ENCODE measurements at regions of chr10 and their contacts with region 1.

Region 1: GRCh38 chr10:52308251-52309031 is 5.6 kb upstream of the DKK1 start:
- DNase-seq: peak; percentile 54
- ATAC-seq: no peak
- H3K4me3 Mint-ChIP-seq: peak overlapping the region; percentile 5
- H3K27ac Mint-ChIP-seq: no peak overlapping the region
- H3K4me1 Mint-ChIP-seq: peaks cover 11% of the 10 kb centered on the region
- H3K27me3 Mint-ChIP-seq: peaks cover 39% of the 10 kb centered on the region

Region 2: DNA sequence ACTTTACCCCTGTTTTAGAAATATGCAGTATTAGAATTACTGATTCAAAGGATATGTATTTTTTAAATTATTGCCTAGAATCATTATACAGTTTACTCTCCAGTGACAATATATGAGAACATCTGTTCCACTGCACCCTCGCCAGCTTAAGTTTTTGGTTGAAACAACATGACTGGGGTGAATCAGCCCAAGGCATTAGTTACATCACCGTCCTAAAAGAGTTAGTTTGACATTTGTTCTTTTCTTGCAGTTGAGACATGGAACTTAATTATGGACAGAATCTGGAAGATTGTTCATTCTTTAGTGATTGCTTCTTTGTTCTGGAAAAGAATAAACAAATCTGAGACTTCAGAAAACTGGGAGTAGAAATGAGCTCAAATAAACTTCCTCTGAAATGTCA is 161.7 kb before region 1 on chr10:
- CTCF ChIA-PET with region 1: no interaction called
- POLR2A ChIA-PET with region 1: no interaction called
- intact Hi-C with region 1: no loop called
- DNase-seq: no peak
- ATAC-seq: no peak
- H3K4me3 Mint-ChIP-seq: no peak overlapping the region
- H3K27ac Mint-ChIP-seq: no peak overlapping the region
- H3K4me1 Mint-ChIP-seq: no peaks in the 10 kb centered on the region
- H3K27me3 Mint-ChIP-seq: no peaks in the 10 kb centered on the region

Region 3: GRCh38 chr10:52332815-52333214 is 24.4 kb after region 1 on chr10:
- CTCF ChIA-PET with region 1: interaction called, 5 read pairs
- POLR2A ChIA-PET with region 1: no interaction called
- intact Hi-C with region 1: loop called in 1 of 2 experiments (anchors 2 kb)
- DNase-seq: no peak
- ATAC-seq: no peak
- H3K4me3 Mint-ChIP-seq: no peak overlapping the region
- H3K27ac Mint-ChIP-seq: no peak overlapping the region
- H3K4me1 Mint-ChIP-seq: no peaks in the 10 kb centered on the region
- H3K27me3 Mint-ChIP-seq: no peaks in the 10 kb centered on the region

Region 4: DNA sequence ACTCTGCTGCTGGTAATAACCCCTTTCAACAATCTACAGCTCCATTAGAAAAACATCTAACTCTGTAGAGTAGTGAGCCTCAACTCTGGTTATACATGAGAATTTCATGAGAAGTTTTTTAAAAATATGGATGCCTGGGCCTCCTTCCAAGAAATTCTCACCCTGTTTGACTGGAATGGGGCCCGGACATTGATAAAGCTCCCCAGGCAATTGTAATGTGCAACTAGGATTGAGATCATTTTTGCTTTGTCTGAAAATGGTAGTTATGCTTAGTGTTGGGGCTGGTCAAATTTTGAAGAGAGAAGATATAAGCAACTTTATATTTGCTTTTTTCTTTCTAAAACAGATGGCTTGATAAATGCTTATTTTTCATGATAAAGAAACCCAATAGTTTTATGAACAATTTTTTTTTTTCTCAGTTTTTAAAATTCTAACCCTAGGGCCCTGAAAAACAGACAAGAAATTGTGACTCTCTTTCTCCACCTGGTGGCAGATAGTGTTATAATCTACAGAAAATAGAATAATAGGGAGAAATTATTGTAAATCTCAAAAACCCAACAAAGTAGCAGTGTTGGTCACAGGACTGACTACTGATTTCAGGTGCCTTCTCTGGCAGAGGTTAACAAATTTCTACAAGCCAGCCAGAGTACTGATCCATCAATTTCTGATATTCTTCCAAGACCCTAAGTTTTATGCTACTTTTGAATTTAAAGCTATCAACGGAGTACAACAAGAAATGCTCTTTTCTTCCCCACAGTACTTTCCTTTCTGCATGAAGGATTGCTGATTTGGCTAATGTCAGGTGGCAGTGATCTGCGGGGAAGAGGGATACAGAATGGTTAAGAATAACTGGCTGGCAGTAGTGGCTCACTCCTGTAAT is 180.4 kb after region 1 on chr10:
- CTCF ChIA-PET with region 1: interaction called, 3 read pairs
- POLR2A ChIA-PET with region 1: no interaction called
- intact Hi-C with region 1: loop called (anchors 1 to 5 kb)
- DNase-seq: no peak
- ATAC-seq: no peak
- H3K4me3 Mint-ChIP-seq: no peak overlapping the region
- H3K27ac Mint-ChIP-seq: no peak overlapping the region
- H3K4me1 Mint-ChIP-seq: no peaks in the 10 kb centered on the region
- H3K27me3 Mint-ChIP-seq: no peaks in the 10 kb centered on the region

Region 5: GRCh38 chr10:52566471-52567246 is 258.2 kb after region 1 on chr10:
- CTCF ChIA-PET with region 1: no interaction called
- POLR2A ChIA-PET with region 1: no interaction called
- intact Hi-C with region 1: loop called (anchors 2 to 10 kb)
- DNase-seq: no peak
- ATAC-seq: no peak
- H3K4me3 Mint-ChIP-seq: no peak overlapping the region
- H3K27ac Mint-ChIP-seq: no peak overlapping the region
- H3K4me1 Mint-ChIP-seq: no peaks in the 10 kb centered on the region
- H3K27me3 Mint-ChIP-seq: no peaks in the 10 kb centered on the region

Region 6: GRCh38 chr10:52597189-52597863 is 288.9 kb after region 1 on chr10:
- CTCF ChIA-PET with region 1: no interaction called
- POLR2A ChIA-PET with region 1: no interaction called
- intact Hi-C with region 1: loop called in 1 of 2 experiments (anchors 5 kb)
- DNase-seq: no peak
- ATAC-seq: no peak
- H3K4me3 Mint-ChIP-seq: no peak overlapping the region
- H3K27ac Mint-ChIP-seq: no peak overlapping the region
- H3K4me1 Mint-ChIP-seq: no peaks in the 10 kb centered on the region
- H3K27me3 Mint-ChIP-seq: no peaks in the 10 kb centered on the region

Region 7: DNA sequence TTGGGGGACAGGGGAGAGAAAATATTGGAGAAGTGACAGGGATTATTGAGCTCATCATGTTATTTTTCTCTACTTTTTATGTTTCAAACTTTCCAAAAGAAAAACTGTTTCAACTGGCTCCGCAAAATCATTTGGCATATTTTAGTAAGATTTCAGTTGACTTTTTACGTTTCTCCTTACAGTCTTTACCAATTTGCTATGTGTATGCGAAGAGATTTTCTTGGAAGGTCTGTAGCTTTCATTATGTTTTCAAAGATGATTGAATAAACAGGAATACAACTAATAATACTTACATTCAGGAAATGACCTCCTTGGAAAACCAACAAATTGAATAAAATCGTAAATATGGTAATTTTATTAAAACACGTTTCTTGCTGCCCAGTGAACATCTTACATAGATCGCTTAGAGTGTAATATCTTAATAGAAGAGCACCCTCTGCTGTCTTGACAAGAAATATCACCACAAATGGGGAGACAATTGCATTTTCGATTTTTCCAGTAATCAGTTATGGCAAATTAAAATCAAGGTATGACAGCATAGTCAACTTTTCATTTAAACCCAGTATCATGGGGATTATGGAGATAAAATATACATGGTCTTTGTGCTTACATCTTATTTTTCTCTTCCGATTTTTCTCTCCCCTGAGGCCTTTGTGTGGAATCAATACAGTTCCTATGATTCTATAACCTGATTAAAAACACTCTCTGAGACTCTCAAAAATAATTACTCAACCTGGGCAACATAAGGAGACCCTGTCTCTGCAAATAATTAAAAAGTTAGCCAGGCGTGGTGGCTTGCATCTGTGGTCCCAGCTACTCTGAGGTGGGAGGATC is 421.0 kb after region 1 on chr10:
- CTCF ChIA-PET with region 1: no interaction called
- POLR2A ChIA-PET with region 1: no interaction called
- intact Hi-C with region 1: loop called in 1 of 2 experiments (anchors 1 kb)
- DNase-seq: no peak
- ATAC-seq: no peak
- H3K4me3 Mint-ChIP-seq: no peak overlapping the region
- H3K27ac Mint-ChIP-seq: no peak overlapping the region
- H3K4me1 Mint-ChIP-seq: no peaks in the 10 kb centered on the region
- H3K27me3 Mint-ChIP-seq: no peaks in the 10 kb centered on the region

Region 8: GRCh38 chr10:52779541-52780390 is 471.3 kb after region 1 on chr10:
- CTCF ChIA-PET with region 1: no interaction called
- POLR2A ChIA-PET with region 1: no interaction called
- intact Hi-C with region 1: loop called (anchors 1 to 5 kb)
- DNase-seq: peak; percentile 74
- ATAC-seq: peak; percentile 68
- H3K4me3 Mint-ChIP-seq: no peak overlapping the region
- H3K27ac Mint-ChIP-seq: no peak overlapping the region
- H3K4me1 Mint-ChIP-seq: no peaks in the 10 kb centered on the region
- H3K27me3 Mint-ChIP-seq: peaks cover 4% of the 10 kb centered on the region